Activated CD8-positive, alpha-beta T cell treated with anti-CD3 and anti-CD28 coated beads, Interleukin-2, amount 10 ng/mL, durations not matched to agents 7 days and 5 days (primary cell): ENCODE measurements at regions of chr12 and their contacts with region 1.

Region 1: DNA sequence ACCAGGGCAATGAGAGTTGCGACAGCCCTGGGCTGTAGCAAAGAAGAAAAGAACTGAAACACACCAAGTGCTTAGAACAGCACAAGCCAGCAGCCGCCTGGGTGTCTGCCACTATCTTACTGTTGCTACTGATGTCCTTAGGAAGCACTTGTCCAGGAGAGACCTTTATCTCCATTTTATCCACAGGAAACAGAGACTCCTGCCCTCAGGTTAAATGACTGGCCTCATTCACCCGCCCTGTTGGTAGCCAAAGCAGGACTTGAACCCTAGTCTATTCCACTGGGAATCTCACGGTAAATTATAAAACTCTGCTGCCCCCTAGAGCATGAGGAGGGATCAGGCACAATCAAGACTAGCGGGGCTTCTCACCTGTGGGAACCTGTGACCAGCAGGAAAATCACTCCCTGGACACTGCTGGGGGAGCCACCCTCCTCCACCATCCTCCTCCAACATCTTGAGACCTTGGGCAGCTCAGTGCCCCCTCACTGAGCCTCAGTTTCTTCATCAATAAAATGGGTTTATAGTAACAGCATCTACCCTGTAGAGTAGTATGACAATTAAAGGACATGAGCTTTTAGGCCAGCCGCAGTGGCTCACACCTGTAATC is 20.5 kb upstream of the TESC start:
- DNase-seq: peak; percentile 49
- ATAC-seq: peak; percentile 69
- H3K4me3 Mint-ChIP-seq: no peak overlapping the region
- H3K27ac Mint-ChIP-seq: no peak overlapping the region
- H3K4me1 Mint-ChIP-seq: peaks cover 6% of the 10 kb centered on the region
- H3K27me3 Mint-ChIP-seq: peaks cover 3% of the 10 kb centered on the region

Region 2: GRCh38 chr12:116697305-116697704 is 422.4 kb before region 1 on chr12:
- CTCF ChIA-PET with region 1: interaction called, 11 read pairs
- POLR2A ChIA-PET with region 1: no interaction called
- DNase-seq: peak; percentile 31
- ATAC-seq: no peak
- H3K4me3 Mint-ChIP-seq: no peak overlapping the region
- H3K27ac Mint-ChIP-seq: no peak overlapping the region
- H3K4me1 Mint-ChIP-seq: peaks cover 4% of the 10 kb centered on the region
- H3K27me3 Mint-ChIP-seq: peaks cover 28% of the 10 kb centered on the region

Region 3: GRCh38 chr12:117019866-117020265 is 99.8 kb before region 1 on chr12:
- CTCF ChIA-PET with region 1: interaction called, 86 read pairs
- POLR2A ChIA-PET with region 1: no interaction called
- DNase-seq: no peak
- ATAC-seq: no peak
- H3K4me3 Mint-ChIP-seq: no peak overlapping the region
- H3K27ac Mint-ChIP-seq: no peak overlapping the region
- H3K4me1 Mint-ChIP-seq: no peaks in the 10 kb centered on the region
- H3K27me3 Mint-ChIP-seq: no peaks in the 10 kb centered on the region

Region 4: DNA sequence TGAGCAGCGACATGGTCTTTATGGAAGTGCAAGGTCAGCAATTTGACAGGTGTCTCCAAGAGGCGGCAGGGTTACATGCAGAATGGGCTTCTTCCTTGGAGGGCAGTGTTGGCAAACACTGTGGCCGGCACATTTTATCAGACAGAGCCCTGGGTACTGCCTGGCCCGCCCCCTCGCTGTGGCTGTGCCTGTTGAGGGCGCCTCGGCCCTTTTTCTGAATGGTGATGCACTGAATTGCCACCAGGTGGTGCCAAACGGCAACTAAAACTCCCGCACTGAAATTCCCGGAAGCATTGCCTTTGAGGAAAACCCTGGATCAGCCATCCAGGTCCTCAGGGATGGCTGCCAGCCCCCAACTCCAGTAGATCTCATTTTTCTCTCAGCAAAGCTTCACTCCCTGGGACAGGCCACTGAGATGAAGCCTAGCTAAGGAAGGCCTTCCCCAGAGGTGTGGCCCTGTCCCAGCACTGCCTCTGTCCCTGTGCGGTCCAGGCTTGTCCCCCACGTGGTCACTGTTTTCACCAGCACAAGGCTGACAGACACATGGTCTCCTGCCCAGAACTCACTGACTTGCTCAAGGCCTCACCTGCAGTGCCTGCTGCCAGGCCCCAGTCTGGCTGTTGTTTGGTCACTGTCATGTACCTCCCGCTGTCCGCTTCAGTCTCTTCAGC is 94.1 kb before region 1 on chr12:
- CTCF ChIA-PET with region 1: interaction called, 86 read pairs
- POLR2A ChIA-PET with region 1: interaction called, 3 read pairs
- DNase-seq: peak; percentile 67
- ATAC-seq: peak; percentile 84
- H3K4me3 Mint-ChIP-seq: no peak overlapping the region
- H3K27ac Mint-ChIP-seq: peak overlapping the region; percentile 87
- H3K4me1 Mint-ChIP-seq: peaks cover 11% of the 10 kb centered on the region
- H3K27me3 Mint-ChIP-seq: no peaks in the 10 kb centered on the region

Region 5: DNA sequence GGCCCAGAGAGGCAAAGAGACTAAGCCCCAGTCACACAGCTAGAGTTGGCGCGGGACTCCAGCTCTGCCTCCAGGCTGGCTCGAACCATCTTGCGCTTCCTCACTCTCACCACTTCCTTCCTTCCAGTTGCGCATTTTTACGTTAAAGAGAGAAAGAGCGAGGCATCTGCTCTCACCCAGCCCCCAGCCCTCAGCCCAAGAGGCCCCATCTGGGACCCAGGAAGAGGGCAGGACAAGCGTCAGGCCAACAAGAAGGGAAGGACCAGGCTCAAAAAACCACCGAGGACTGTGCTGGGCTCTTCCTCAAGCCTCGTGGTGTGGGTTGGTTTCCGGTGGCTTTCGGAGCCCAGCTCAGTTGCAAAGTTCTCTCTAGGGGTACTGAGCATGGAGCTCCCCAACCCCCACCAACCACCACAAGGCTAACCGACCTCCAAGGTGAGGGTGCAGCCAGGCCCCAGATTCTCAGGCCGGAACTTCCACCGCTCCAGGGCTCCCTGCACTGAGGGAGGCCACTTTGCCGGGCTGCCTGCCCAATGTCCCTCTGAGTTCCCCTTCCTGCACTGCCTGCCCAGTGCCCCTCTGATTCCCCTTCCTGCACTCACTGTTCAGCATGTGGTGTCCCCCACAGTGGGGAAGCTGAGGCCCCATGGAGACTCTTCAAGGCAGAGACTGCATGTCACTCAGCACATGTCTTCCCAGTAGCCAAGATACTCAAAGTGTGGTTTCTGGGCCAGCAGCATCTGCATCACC is 56.4 kb before region 1 on chr12:
- CTCF ChIA-PET with region 1: interaction called, 12 read pairs
- POLR2A ChIA-PET with region 1: interaction called, 3 read pairs
- DNase-seq: peak; percentile 88
- ATAC-seq: peak; percentile 78
- H3K4me3 Mint-ChIP-seq: peak overlapping the region; percentile 57
- H3K27ac Mint-ChIP-seq: peak overlapping the region; percentile 97
- H3K4me1 Mint-ChIP-seq: peaks cover 85% of the 10 kb centered on the region
- H3K27me3 Mint-ChIP-seq: no peaks in the 10 kb centered on the region

Region 6: GRCh38 chr12:117098361-117099217 is 21.1 kb before region 1 on chr12:
- CTCF ChIA-PET with region 1: interaction called, 15 read pairs
- POLR2A ChIA-PET with region 1: interaction called, 3 read pairs
- DNase-seq: peak; percentile 66
- ATAC-seq: peak; percentile 51
- H3K4me3 Mint-ChIP-seq: peak overlapping the region; percentile 85
- H3K27ac Mint-ChIP-seq: peak overlapping the region; percentile 61
- H3K4me1 Mint-ChIP-seq: peaks cover 36% of the 10 kb centered on the region
- H3K27me3 Mint-ChIP-seq: peaks cover 12% of the 10 kb centered on the region

Region 7: DNA sequence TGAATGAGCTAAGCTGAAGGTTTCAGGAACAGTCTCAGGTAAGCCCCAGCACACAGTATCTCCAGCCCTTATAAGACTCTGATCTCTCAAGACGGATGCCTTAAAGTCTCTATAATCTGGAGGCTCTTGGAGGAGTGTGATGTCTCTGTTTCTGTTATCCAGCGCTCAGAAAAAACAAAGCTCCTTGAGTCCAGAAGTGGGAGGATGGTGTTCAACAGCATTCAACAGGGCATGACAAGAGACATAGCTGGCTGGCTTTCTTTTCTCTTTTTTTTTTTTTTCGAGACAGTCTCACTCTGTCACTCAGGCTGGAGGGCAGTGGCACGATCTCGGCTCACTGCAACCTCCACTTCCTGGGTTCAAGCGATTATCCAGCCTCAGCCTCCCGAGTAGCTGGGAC is 11.1 kb after region 1 on chr12:
- CTCF ChIA-PET with region 1: interaction called, 18 read pairs
- POLR2A ChIA-PET with region 1: no interaction called
- DNase-seq: no peak
- ATAC-seq: no peak
- H3K4me3 Mint-ChIP-seq: no peak overlapping the region
- H3K27ac Mint-ChIP-seq: no peak overlapping the region
- H3K4me1 Mint-ChIP-seq: peaks cover 22% of the 10 kb centered on the region
- H3K27me3 Mint-ChIP-seq: no peaks in the 10 kb centered on the region

Region 8: DNA sequence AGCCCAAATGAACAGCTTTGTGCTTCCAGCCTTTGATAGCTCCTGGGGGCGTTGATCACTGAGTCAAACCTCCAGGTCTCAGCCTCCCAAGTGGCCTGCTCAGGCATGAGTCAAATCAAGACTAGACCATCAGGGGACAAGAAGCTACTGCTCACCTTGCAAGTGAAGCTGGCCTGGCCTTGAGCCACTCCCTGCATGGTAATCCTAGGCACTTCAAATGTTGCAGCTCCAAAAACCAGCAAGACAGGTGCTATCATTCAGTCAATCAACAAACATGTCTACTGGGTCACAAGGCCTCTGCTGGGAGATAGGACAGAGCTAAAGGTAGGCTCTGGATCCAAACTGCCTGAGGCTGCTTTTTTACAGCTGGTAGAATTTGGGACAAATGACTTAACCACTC is 274.8 kb after region 1 on chr12:
- CTCF ChIA-PET with region 1: no interaction called
- POLR2A ChIA-PET with region 1: no interaction called
- DNase-seq: no peak
- ATAC-seq: no peak
- H3K4me3 Mint-ChIP-seq: no peak overlapping the region
- H3K27ac Mint-ChIP-seq: no peak overlapping the region
- H3K4me1 Mint-ChIP-seq: no peaks in the 10 kb centered on the region
- H3K27me3 Mint-ChIP-seq: no peaks in the 10 kb centered on the region